ENCODE measurements at regions of chr10 and their contacts with region 1.

Region 1: DNA sequence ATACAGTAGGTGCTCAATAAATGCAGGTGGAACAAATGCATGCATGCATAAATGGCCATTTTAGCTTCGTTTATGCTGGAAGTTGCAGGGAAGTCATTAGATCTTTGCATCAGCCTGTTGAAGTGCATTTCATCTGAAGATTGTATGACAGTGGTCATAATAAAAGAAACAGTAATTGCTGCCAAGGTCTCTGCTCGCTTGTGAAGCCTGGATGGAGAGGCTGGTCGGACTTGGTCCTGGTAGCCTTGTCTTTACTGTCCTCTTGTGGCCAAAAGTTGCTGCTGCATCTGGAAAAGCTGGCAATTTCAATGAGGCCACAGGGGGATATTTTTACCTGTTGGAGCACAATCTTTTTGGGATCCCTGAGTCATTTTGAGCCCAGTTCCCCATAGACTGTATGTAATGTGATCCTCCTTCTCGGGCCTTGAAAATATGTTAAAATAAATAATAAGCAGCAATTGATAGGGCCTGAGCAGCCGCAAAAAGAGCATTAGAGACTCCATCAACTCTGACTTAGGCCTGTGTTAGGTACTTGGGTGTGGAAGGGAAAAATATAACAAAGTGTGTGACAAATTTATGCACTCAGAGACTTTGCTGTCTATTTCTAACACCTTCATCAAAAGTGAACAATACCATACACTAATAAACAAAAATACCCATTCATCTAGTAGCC is 31.6 kb upstream of the HABP2 start:
- DNase-seq: no peak

Region 2: GRCh38 chr10:113139699-113140098 is 381.6 kb before region 1 on chr10:
- intact Hi-C with region 1: loop called (anchors 10 kb)
- DNase-seq: no peak

Region 3: DNA sequence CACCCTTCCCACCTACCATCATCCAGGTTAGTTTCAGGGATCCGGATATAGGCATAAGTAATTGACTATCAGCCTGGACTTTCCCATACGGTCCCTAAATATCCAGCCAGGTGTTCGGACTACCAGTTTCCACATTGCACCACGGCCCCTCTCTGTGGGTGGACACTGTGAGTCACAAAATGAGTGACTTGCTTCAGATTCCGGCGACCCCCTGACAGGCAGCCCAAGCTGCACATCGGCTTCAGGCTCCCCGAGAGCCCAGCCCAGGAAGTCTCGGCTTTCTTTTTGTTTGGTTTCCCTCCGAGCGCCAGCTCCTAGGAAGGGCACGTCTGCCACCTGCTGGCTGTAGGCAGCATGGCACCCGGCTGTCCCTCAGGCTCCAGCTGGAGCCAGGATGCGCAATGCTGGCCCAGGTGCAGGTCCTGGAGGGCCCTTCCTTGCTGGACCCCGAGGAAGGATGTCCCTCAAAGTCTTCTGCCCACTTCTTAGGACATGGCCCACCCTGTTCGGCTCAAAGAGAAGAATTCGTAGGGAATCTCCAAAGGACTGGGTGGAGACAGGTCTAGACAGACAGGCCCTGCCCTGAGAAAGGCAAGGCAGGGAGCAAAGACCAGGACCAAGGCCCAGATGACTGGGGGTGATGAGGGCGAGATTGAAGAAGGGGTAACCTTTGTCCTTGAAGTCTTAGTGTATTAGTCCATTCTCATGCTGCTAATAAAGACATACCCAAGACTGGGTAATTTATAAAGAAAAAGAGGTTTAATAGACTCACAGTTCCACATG is 42.2 kb after region 1 on chr10:
- intact Hi-C with region 1: loop called (anchors 2 kb)
- DNase-seq: peak; percentile 85

Region 4: GRCh38 chr10:114504769-114505579 is 983.7 kb after region 1 on chr10:
- intact Hi-C with region 1: no loop called
- DNase-seq: no peak

Region 5: GRCh38 chr10:114631666-114632417 is 1110.6 kb after region 1 on chr10:
- intact Hi-C with region 1: no loop called
- DNase-seq: no peak